Activated CD8-positive, alpha-beta T cell treated with anti-CD3 and anti-CD28 coated beads for 36 hours (primary cell): ENCODE measurements at regions of chr3 and their contacts with region 1.

Region 1: DNA sequence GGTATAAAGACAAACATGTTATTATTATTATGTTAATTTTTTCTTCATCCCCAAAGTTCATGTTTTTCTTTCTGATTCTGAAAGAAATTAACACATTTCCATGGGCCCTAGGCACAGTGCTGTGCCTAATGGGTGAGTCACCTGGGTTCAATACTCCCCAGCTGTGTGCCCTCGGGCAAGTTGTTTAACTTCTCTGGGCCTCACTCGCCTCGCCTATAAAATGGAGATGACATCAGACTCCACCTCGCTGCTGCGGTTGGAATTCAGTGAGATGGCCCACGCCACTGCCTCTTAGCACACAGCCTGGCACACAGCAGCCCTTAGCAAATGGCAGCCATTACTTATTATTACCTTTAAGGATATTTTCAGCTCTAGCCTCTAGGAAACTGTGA is 22.6 kb downstream of the DNASE1L3 start:
- DNase-seq: no peak
- ATAC-seq: peak; percentile 55
- H3K4me3 Mint-ChIP-seq: no peak overlapping the region
- H3K27ac Mint-ChIP-seq: no peak overlapping the region
- H3K4me1 Mint-ChIP-seq: no peaks in the 10 kb centered on the region
- H3K27me3 Mint-ChIP-seq: no peaks in the 10 kb centered on the region
- CTCF ChIP-seq: no peak

Region 2: DNA sequence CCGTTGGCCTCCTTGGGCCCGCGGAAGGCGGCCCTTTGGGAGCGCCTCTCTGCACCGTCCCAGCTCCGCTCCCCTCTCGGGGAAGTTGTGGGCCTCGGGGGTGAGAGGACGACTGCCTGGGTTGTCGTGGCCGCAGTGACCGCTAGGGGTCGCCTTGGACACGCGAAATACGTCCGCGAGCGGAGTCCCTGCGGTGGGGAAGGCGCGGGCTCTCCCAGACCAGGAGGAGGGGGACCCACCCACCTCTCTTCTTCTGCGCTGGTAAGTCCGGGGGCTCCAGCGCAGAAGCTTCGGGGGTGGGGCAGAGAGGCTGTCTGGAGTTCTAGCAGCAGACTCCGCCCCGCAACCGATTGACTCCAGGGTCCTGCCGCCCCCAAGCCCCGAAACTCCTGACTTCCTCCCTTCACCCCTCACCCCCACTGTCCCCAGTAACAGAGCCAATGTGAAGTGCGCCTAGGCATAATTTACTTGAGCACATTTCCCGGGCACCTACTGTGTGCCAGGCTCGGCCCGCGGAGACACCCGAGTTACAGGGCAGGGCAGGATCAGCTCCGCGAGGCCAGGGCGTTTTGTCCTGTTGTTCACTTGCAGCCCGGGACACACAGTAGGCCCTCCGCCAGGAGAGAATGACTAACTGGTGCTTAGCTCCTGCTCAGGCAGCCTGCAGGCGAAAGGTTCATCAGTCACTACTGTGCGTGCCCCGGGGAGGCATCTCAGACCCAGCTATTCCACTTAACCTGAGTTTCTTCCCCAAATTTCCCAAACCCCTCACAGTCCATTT is 10.2 kb before region 1 on chr3:
- CTCF ChIA-PET with region 1: interaction called, 45 read pairs
- POLR2A ChIA-PET with region 1: no interaction called
- intact Hi-C with region 1: no loop called
- DNase-seq: peak; percentile 91
- ATAC-seq: peak; percentile 89
- H3K4me3 Mint-ChIP-seq: peak overlapping the region; percentile 48
- H3K27ac Mint-ChIP-seq: no peak overlapping the region
- H3K4me1 Mint-ChIP-seq: peaks cover 18% of the 10 kb centered on the region
- H3K27me3 Mint-ChIP-seq: peaks cover 8% of the 10 kb centered on the region
- CTCF ChIP-seq: peak; percentile 98

Region 3: DNA sequence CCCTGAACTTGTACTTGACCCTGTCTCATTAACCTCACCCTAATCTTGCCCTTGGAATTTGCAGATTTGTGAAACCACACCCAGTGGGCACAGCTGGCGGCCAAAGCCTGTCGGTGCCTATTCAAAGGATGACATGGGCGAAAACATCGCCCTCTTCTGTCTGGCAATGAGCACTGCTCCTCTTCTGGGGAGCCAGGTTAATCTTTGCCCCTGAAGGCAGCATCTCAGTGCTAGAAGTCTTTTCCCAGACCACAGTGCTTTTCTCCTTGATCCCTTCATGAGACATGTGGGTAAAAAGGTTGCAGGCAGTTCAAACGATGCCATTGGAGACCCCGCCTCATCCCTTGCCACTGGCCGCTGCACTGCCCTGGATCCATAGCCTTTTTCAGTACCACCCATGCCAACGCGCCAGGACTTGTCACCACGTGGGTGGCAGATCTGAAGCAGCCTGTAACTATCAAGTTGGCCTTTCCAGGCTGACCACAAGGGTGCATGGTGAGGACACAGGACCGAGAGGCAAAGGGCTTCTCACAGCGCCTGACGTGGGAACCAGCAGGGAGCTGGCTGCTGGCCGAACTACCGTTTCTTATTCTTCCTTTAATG is 29.1 kb after region 1 on chr3:
- CTCF ChIA-PET with region 1: interaction called, 264 read pairs
- POLR2A ChIA-PET with region 1: interaction called, 4 read pairs
- intact Hi-C with region 1: loop called (anchors 2 kb)
- DNase-seq: peak; percentile 74
- ATAC-seq: peak; percentile 38
- H3K4me3 Mint-ChIP-seq: no peak overlapping the region
- H3K27ac Mint-ChIP-seq: no peak overlapping the region
- H3K4me1 Mint-ChIP-seq: peaks cover 38% of the 10 kb centered on the region
- H3K27me3 Mint-ChIP-seq: peaks cover 2% of the 10 kb centered on the region
- CTCF ChIP-seq: peak; percentile 87

Region 4: GRCh38 chr3:58231666-58232065 is 43.5 kb after region 1 on chr3:
- CTCF ChIA-PET with region 1: interaction called, 14 read pairs
- POLR2A ChIA-PET with region 1: no interaction called
- intact Hi-C with region 1: no loop called
- DNase-seq: no peak
- ATAC-seq: no peak
- H3K4me3 Mint-ChIP-seq: no peak overlapping the region
- H3K27ac Mint-ChIP-seq: no peak overlapping the region
- H3K4me1 Mint-ChIP-seq: no peaks in the 10 kb centered on the region
- H3K27me3 Mint-ChIP-seq: peaks cover 32% of the 10 kb centered on the region
- CTCF ChIP-seq: no peak

Region 5: DNA sequence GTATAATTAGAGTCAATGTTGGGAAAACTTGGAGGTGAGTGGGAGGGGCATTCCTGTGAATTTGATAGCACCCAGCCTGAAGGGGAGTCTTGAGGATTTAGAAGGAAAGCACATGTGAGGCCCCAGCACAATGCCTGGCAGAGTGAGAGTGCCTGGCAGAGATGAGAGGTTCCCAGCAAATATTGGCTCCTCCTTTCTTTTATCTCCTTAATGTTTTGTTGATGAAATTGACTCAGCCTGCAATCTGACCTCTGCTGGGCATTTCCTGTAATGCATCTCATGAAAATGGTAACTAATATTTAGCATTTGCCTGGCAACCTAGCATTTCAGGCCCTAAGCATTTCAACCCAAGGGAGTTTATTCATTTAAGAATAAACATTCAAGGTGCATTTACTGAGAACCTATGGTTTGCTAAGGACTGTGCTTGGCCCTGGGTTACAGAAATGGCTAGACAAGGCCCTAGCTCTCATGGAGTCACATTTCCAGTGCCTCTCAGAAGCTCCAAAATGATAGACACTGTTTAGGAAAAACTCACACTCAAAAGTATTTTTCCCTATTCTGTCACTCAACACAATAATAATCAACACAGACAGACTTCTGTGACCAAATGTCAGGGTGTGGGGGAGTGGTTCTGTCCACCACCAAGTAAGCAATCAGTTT is 226.5 kb after region 1 on chr3:
- CTCF ChIA-PET with region 1: interaction called, 7 read pairs
- POLR2A ChIA-PET with region 1: no interaction called
- intact Hi-C with region 1: loop called (anchors 10 kb)
- DNase-seq: peak; percentile 67
- ATAC-seq: peak; percentile 89
- H3K4me3 Mint-ChIP-seq: no peak overlapping the region
- H3K27ac Mint-ChIP-seq: no peak overlapping the region
- H3K4me1 Mint-ChIP-seq: no peaks in the 10 kb centered on the region
- H3K27me3 Mint-ChIP-seq: no peaks in the 10 kb centered on the region
- CTCF ChIP-seq: peak; percentile 62